Tibial artery (tissue), 4 donors: ENCODE measurements at regions of chr20 and their contacts with region 1.

Region 1: DNA sequence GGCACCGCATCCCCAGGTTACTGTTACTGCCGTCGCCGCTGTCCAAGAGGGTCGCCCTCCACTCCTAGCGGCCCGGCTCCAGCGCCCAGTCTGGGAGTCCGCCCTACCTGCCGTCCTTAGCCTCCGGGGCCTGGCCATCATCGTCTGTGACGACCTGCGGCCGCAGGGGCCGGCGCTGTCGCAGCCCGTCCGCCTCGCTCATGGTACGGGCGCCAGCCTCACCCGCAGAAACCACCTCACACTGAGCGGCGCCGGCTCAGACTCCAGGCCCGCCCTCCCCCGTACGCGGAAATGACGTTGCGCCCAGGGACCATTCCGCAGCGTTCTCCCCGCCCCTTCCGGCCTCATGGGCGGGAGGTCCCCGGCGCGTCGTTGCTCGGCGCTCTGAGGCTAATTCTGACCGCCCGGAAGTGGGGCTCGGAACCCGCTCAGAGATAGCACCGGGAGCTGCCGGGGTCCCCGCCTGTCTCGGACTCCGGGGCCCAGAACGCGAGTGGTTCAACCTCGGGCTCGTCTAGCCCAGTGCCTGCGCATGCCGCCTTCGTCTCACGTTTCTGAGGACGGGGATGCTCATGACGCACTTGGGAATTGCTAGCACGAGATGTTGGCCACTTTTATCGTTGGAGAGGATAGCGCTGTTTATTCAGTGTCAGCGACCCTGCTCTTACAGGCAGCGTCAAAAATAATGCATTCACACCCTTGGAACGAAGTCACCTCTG is at the start of gene APMAP:
- DNase-seq: peak; percentile 96 to 97
- H3K4me3 ChIP-seq: peak within 1 kb of the TSS; percentile 66 to 80
- H3K27ac ChIP-seq: peak within 1 kb of the TSS; percentile 92 to 94
- H3K4me1 ChIP-seq: peaks cover 0 to 33% (median 23%) of the 10 kb centered on the region in 4 donors
- H3K27me3 ChIP-seq: no peaks in the 10 kb centered on the region
- CTCF ChIP-seq: no peak

Region 2: GRCh38 chr20:25065625-25066338 is 73.1 kb after region 1 on chr20:
- intact Hi-C with region 1: loop called (anchors 1 kb)
- DNase-seq: peak; percentile 58 to 77
- H3K4me3 ChIP-seq: no peak overlapping the region
- H3K27ac ChIP-seq: no peak overlapping the region
- H3K4me1 ChIP-seq: peaks cover 0 to 4% (median 0%) of the 10 kb centered on the region in 4 donors
- H3K27me3 ChIP-seq: peaks cover 0 to 27% of the 10 kb centered on the region in 2 donors
- CTCF ChIP-seq: peak; percentile 81 to 95

Region 3: DNA sequence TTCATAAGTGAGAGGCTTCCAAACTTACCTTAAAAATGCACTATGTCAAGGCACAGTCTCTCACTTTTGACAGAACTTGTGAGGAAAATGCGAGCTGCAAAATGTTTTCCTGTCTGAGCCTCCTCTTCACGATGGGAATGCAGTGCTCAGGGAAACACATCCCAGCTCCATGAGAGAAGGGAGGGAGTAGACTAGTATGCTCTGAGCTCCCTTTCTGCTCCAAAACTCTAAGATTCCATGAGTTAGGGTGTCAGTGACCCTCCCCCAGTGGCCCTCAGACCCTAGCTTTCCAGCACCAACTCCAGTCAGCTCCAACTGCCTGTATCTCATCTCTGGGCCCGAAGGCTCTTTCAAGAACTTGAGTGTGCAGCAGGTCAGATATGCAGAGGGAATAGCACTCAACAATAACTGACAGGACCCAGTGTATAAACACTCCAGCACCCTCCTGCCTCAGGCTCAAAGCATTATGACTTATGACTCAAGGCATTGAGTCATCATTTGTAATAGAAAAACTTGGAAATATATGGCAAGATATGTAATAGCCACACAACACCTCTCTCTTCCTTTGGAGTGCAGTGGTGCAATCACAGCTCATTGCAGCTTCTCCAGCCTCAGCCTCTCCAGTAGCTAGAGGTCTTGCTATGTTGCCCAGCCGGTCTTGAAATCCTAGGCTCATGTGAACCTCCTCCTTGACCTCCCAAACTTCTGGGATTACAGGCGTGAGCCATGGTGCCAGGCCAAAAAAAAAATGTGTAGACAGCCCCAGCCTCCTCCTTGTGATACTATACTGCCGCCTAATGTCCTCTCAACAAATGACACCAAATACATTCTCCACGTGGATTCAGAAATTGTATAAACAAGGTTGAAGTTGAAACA is 186.2 kb after region 1 on chr20:
- intact Hi-C with region 1: loop called (anchors 5 kb)
- DNase-seq: peak; percentile 71
- H3K4me3 ChIP-seq: no peak overlapping the region
- H3K27ac ChIP-seq: peak overlapping the region; percentile 43 to 44
- H3K4me1 ChIP-seq: peaks cover 0 to 10% (median 6%) of the 10 kb centered on the region in 4 donors
- H3K27me3 ChIP-seq: no peaks in the 10 kb centered on the region
- CTCF ChIP-seq: peak; percentile 71 to 72

Region 4: GRCh38 chr20:25254986-25255680 is 262.5 kb after region 1 on chr20:
- intact Hi-C with region 1: loop called (anchors 10 kb)
- DNase-seq: peak; percentile 41 to 86
- H3K4me3 ChIP-seq: no peak overlapping the region
- H3K27ac ChIP-seq: peak overlapping the region; percentile 53 to 66
- H3K4me1 ChIP-seq: peaks cover 4 to 83% (median 64%) of the 10 kb centered on the region in 4 donors
- H3K27me3 ChIP-seq: no peaks in the 10 kb centered on the region
- CTCF ChIP-seq: peak in 1 of 2 experiments; percentile 17

Region 5: GRCh38 chr20:25390538-25391528 is 398.2 kb after region 1 on chr20 and contains the start of gene ABHD12:
- intact Hi-C with region 1: loop called (anchors 5 kb)
- DNase-seq: peak; percentile 96 to 98
- H3K4me3 ChIP-seq: peak within 1 kb of the TSS; percentile 64 to 85
- H3K27ac ChIP-seq: peak within 1 kb of the TSS; percentile 78 to 80
- H3K4me1 ChIP-seq: peaks cover 0 to 12% (median 8%) of the 10 kb centered on the region in 4 donors
- H3K27me3 ChIP-seq: no peaks in the 10 kb centered on the region
- CTCF ChIP-seq: no peak

Region 6: GRCh38 chr20:25407311-25408169 is 414.9 kb after region 1 on chr20 and contains the start of gene GINS1:
- intact Hi-C with region 1: loop called (anchors 5 kb)
- DNase-seq: peak; percentile 61 to 81
- H3K4me3 ChIP-seq: peak within 1 kb of the TSS; percentile 53 to 63
- H3K27ac ChIP-seq: peak within 1 kb of the TSS; percentile 9 to 56
- H3K4me1 ChIP-seq: peaks cover 0 to 17% (median 10%) of the 10 kb centered on the region in 4 donors
- H3K27me3 ChIP-seq: no peaks in the 10 kb centered on the region
- CTCF ChIP-seq: no peak